PC-3 (cell line): ENCODE measurements at regions of chr5 and their contacts with region 1.

Region 1: DNA sequence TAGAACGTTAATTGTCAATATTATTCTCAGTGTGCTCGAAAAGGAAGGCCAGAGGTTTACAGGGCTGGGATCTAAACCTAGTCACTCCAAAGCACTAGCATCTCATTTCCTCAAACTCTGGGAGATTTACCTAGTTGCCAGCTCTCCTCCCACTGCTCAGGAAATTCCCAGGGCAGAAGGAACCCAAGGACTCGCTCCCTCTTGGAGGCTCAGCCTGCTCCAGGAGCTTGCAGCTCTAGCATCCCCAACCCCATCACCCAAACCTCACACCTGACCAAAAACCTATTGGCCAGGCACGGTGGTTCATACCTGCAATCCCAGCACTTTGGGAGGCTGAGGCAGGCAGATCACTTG is 26.0 kb downstream of the SERINC5 start:
- DNase-seq: no peak
- ATAC-seq: no peak
- H3K4me3 ChIP-seq: no peak overlapping the region
- H3K27ac ChIP-seq: no peak overlapping the region
- H3K4me1 ChIP-seq: peaks cover 17% of the 10 kb centered on the region
- H3K27me3 ChIP-seq: no peaks in the 10 kb centered on the region
- CTCF ChIP-seq: no peak

Region 2: DNA sequence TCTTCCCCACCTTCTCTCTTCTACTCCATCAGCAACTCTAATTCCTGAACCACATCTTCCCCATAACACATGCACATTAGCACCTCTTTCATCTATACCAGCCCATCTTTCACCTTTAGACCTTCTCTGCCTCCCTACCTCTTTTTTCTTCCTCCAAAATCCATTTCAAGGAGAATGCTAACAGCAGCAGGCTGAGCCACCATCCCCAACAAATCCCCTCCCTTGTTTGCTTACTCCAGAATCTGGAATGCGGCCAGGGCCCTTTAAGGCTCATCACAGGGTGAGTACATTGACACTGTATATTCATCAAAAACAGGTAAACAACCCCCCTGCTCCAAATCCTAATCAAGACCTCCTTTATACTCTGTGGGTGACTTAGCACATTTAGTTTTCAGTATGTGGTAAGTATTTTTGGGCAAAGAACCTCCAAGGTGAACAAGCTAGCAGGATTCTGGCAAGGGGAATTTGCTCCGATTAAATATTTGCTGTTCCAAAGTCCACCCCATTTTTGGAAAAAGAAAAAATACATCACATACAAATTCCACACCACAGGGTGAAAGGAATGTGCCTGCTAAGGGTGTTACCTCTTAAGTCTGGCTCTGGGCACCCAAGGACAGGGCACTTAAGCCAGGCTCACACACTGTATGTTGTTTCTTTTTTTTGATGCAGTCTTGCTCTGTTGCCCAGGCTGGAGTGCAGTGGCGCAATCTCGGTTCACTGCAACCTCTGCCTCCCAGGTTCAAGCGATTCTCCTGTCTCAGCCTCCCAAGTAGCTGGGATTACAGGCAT is 45.5 kb before region 1 on chr5:
- CTCF ChIA-PET with region 1: no interaction called
- POLR2A ChIA-PET with region 1: no interaction called
- intact Hi-C with region 1: loop called (anchors 1 kb)
- DNase-seq: peak; percentile 67
- ATAC-seq: peak; percentile 42
- H3K4me3 ChIP-seq: no peak overlapping the region
- H3K27ac ChIP-seq: peak overlapping the region; percentile 62
- H3K4me1 ChIP-seq: peaks cover 50% of the 10 kb centered on the region
- H3K27me3 ChIP-seq: no peaks in the 10 kb centered on the region
- CTCF ChIP-seq: no peak